CD4-positive, alpha-beta T cell (primary cell): ENCODE measurements at regions of chr2 and their contacts with region 1.

Region 1: DNA sequence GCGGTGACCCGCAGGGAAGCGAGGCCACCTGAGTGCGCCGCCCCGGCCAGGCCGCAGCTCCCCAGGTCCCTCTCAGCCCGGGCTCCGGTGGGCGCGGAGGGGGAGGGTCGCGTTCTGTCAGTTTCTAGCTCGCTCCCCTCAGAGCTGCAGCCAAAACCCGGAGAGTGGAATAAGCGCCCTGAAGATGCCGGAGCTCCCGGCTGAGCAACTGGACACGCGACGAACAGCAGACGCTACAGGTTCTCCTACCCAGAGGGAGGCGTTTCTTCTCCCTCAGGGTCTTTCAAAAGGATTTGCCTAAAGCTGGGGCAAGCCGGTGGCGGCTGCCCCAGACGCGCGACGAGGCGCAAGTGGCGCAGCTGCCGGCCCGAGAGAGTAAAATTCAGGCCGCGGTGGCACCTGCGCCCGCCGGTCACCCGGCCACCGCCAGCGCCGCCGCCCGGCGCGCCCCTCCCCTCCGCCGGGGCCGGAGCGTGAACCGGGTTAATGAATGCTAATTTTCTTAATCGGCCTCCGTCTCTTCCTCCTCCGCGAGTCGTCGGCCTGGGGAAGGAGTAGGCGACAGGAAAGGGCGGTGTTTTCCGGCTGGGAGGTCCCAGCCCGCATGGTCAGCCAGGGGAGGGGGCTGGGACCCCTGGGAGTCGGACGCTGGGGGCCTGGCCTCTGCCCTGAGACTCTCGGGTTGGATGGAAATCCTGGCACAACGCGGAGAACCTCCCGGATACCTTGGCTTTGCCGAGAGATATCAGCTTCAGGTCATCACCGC is 845 bp upstream of the CDC42EP3 start:
- DNase-seq: peak; percentile 34 to 82 (median 58)
- ATAC-seq: peak; percentile 46
- H3K4me3 ChIP-seq: peak overlapping the region; percentile 76
- H3K4me3 Mint-ChIP-seq: peak overlapping the region; percentile 91
- H3K27ac ChIP-seq: peak overlapping the region; percentile 59 to 64
- H3K27ac Mint-ChIP-seq: peak overlapping the region; percentile 86
- H3K4me1 ChIP-seq: peaks cover 30% of the 10 kb centered on the region
- H3K4me1 Mint-ChIP-seq: peaks cover 55% of the 10 kb centered on the region
- H3K27me3 ChIP-seq: no peaks in the 10 kb centered on the region
- H3K27me3 Mint-ChIP-seq: no peaks in the 10 kb centered on the region
- CTCF ChIP-seq: no peak

Region 2: DNA sequence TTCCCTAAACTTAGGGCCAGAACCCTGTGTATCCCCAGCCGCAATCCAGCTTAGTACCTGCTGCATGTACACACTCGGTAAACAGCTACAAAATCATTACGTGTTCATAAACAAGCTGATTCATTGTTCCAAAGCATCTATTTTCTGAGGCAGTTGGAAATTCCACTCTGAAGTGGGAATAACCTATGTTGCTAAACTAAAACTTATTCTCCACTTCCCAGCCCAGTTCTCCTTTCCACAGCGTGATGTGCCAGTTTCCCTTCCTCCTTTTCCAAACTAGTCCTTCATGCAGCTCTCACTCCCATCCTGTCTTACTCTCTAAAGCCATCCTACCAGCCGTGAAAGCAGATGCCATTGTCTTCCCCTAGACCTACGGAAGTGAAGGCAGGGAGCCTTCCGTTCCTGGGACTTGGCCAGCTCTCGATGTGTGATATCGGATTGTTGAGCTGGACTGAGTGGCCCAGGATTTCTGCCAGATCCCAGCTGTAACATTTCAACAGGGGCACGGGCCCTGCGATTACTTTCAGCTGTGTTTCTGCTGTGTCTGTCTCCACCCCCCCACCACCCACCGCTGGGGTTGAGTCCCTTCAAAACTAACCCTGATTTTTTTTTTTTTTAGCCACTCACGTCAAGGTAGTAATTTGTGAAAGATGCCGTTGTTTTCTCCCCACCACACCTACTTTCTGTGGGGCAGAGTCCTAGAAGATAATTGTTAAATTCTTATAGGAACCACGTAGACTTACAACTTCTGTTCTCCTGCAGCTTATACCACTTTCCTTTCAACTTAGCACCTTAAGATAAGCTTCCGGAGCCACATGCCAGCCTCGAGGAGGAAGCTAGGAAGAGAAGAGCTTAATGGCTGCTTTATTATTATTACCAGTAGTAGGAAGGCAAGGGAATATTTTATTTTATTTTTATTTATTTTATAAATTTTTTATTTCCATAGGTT is 1215.8 kb before region 1 on chr2:
- CTCF ChIA-PET with region 1: no interaction called
- POLR2A ChIA-PET with region 1: no interaction called
- intact Hi-C with region 1: no loop called
- DNase-seq: peak in 2 of 14 experiments; percentile 46 to 54
- ATAC-seq: no peak
- H3K4me3 ChIP-seq: no peak overlapping the region
- H3K4me3 Mint-ChIP-seq: no peak overlapping the region
- H3K27ac ChIP-seq: no peak overlapping the region
- H3K27ac Mint-ChIP-seq: no peak overlapping the region
- H3K4me1 ChIP-seq: peaks cover 6% of the 10 kb centered on the region
- H3K4me1 Mint-ChIP-seq: no peaks in the 10 kb centered on the region
- H3K27me3 ChIP-seq: no peaks in the 10 kb centered on the region
- H3K27me3 Mint-ChIP-seq: no peaks in the 10 kb centered on the region
- CTCF ChIP-seq: no peak

Region 3: GRCh38 chr2:37156857-37157714 is 515.2 kb before region 1 on chr2 and contains the start of gene EIF2AK2:
- CTCF ChIA-PET with region 1: no interaction called
- POLR2A ChIA-PET with region 1: no interaction called
- intact Hi-C with region 1: loop called in 1 of 2 experiments (anchors 10 kb)
- DNase-seq: peak; percentile 68 to 92 (median 77)
- ATAC-seq: peak; percentile 97
- H3K4me3 ChIP-seq: peak within 1 kb of the TSS; percentile 96
- H3K4me3 Mint-ChIP-seq: peak within 1 kb of the TSS; percentile 97
- H3K27ac ChIP-seq: peak within 1 kb of the TSS; percentile 44 to 64
- H3K27ac Mint-ChIP-seq: peak within 1 kb of the TSS; percentile 95
- H3K4me1 ChIP-seq: peaks cover 31% of the 10 kb centered on the region
- H3K4me1 Mint-ChIP-seq: peaks cover 49% of the 10 kb centered on the region
- H3K27me3 ChIP-seq: no peaks in the 10 kb centered on the region
- H3K27me3 Mint-ChIP-seq: no peaks in the 10 kb centered on the region
- CTCF ChIP-seq: no peak
- total RNA-seq, gene EIF2AK2: 29.1 to 31.1 TPM

Region 4: GRCh38 chr2:37585982-37586621 is 86.2 kb before region 1 on chr2:
- CTCF ChIA-PET with region 1: interaction called, 8 read pairs
- POLR2A ChIA-PET with region 1: interaction called, 8 read pairs
- intact Hi-C with region 1: loop called (anchors 1 to 5 kb)
- DNase-seq: peak; percentile 38 to 92 (median 67)
- ATAC-seq: peak; percentile 85
- H3K4me3 ChIP-seq: peak overlapping the region; percentile 6
- H3K4me3 Mint-ChIP-seq: peak overlapping the region; percentile 63
- H3K27ac ChIP-seq: peak overlapping the region; percentile 65 to 67
- H3K27ac Mint-ChIP-seq: peak overlapping the region; percentile 86
- H3K4me1 ChIP-seq: peaks cover 62% of the 10 kb centered on the region
- H3K4me1 Mint-ChIP-seq: peaks cover 89% of the 10 kb centered on the region
- H3K27me3 ChIP-seq: no peaks in the 10 kb centered on the region
- H3K27me3 Mint-ChIP-seq: no peaks in the 10 kb centered on the region
- CTCF ChIP-seq: no peak

Region 5: GRCh38 chr2:37623971-37624900 is 48.1 kb before region 1 on chr2:
- CTCF ChIA-PET with region 1: no interaction called
- POLR2A ChIA-PET with region 1: interaction called, 12 read pairs
- intact Hi-C with region 1: loop called in 1 of 2 experiments (anchors 2 kb)
- DNase-seq: peak in 4 of 14 experiments; percentile 34 to 69 (median 62)
- ATAC-seq: peak; percentile 35
- H3K4me3 ChIP-seq: no peak overlapping the region
- H3K4me3 Mint-ChIP-seq: peak overlapping the region; percentile 61
- H3K27ac ChIP-seq: peak overlapping the region; percentile 0 to 71
- H3K27ac Mint-ChIP-seq: peak overlapping the region; percentile 85
- H3K4me1 ChIP-seq: peaks cover 59% of the 10 kb centered on the region
- H3K4me1 Mint-ChIP-seq: peaks cover 70% of the 10 kb centered on the region
- H3K27me3 ChIP-seq: no peaks in the 10 kb centered on the region
- H3K27me3 Mint-ChIP-seq: no peaks in the 10 kb centered on the region
- CTCF ChIP-seq: no peak

Region 6: GRCh38 chr2:37653805-37654378 is 18.4 kb before region 1 on chr2:
- CTCF ChIA-PET with region 1: interaction called, 7 read pairs
- POLR2A ChIA-PET with region 1: interaction called, 43 read pairs
- intact Hi-C with region 1: loop called (anchors 2 kb)
- DNase-seq: peak in 3 of 14 experiments; percentile 49 to 77 (median 72)
- ATAC-seq: peak; percentile 17
- H3K4me3 ChIP-seq: no peak overlapping the region
- H3K4me3 Mint-ChIP-seq: peak overlapping the region; percentile 71
- H3K27ac ChIP-seq: peak overlapping the region in 1 of 2 donors; percentile 55
- H3K27ac Mint-ChIP-seq: peak overlapping the region; percentile 81
- H3K4me1 ChIP-seq: peaks cover 89% of the 10 kb centered on the region
- H3K4me1 Mint-ChIP-seq: peaks cover 93% of the 10 kb centered on the region
- H3K27me3 ChIP-seq: no peaks in the 10 kb centered on the region
- H3K27me3 Mint-ChIP-seq: no peaks in the 10 kb centered on the region
- CTCF ChIP-seq: no peak

Region 7: GRCh38 chr2:37851828-37852584 is 179.7 kb after region 1 on chr2:
- CTCF ChIA-PET with region 1: no interaction called
- POLR2A ChIA-PET with region 1: no interaction called
- intact Hi-C with region 1: no loop called
- DNase-seq: peak in 3 of 14 experiments; percentile 58 to 67 (median 59)
- ATAC-seq: peak; percentile 90
- H3K4me3 ChIP-seq: peak overlapping the region; percentile 8
- H3K4me3 Mint-ChIP-seq: peak overlapping the region; percentile 54
- H3K27ac ChIP-seq: peak overlapping the region in 1 of 2 donors; percentile 74
- H3K27ac Mint-ChIP-seq: peak overlapping the region; percentile 82
- H3K4me1 ChIP-seq: peaks cover 29% of the 10 kb centered on the region
- H3K4me1 Mint-ChIP-seq: peaks cover 21% of the 10 kb centered on the region
- H3K27me3 ChIP-seq: no peaks in the 10 kb centered on the region
- H3K27me3 Mint-ChIP-seq: no peaks in the 10 kb centered on the region
- CTCF ChIP-seq: no peak

Region 8: GRCh38 chr2:38377050-38377828 is 705.0 kb after region 1 on chr2 and contains the start of gene ATL2:
- CTCF ChIA-PET with region 1: no interaction called
- POLR2A ChIA-PET with region 1: no interaction called
- intact Hi-C with region 1: loop called in 1 of 2 experiments (anchors 10 kb)
- DNase-seq: peak; percentile 87 to 97 (median 91)
- ATAC-seq: peak; percentile 75
- H3K4me3 ChIP-seq: peak within 1 kb of the TSS; percentile 75
- H3K4me3 Mint-ChIP-seq: peak within 1 kb of the TSS; percentile 99
- H3K27ac ChIP-seq: peak within 1 kb of the TSS; percentile 59 to 75
- H3K27ac Mint-ChIP-seq: peak within 1 kb of the TSS; percentile 95
- H3K4me1 ChIP-seq: peaks cover 38% of the 10 kb centered on the region
- H3K4me1 Mint-ChIP-seq: peaks cover 83% of the 10 kb centered on the region
- H3K27me3 ChIP-seq: no peaks in the 10 kb centered on the region
- H3K27me3 Mint-ChIP-seq: no peaks in the 10 kb centered on the region
- CTCF ChIP-seq: no peak
- total RNA-seq, gene ATL2: 85.5 to 91.7 TPM